ENCODE measurements at regions of chr1 and their contacts with region 1.

Region 1: GRCh38 chr1:35298464-35298863 is 30.0 kb downstream of the ZMYM4 start:
- DNase-seq: peak in 3 of 5 donors; percentile 23 to 31 (median 24)
- ATAC-seq: peak; percentile 62 to 84 (median 78)
- H3K4me3 ChIP-seq: no peak overlapping the region
- H3K27ac ChIP-seq: no peak overlapping the region
- H3K4me1 ChIP-seq: peaks cover 0 to 28% (median 17%) of the 10 kb centered on the region in 12 donors
- H3K27me3 ChIP-seq: no peaks in the 10 kb centered on the region
- CTCF ChIP-seq: peak in 11 of 12 donors; percentile 20 to 60 (median 45)
- POLR2A ChIP-seq: no peak

Region 2: GRCh38 chr1:35030756-35031446 is 267.6 kb before region 1 on chr1:
- intact Hi-C with region 1: loop called in 1 of 10 experiments (anchors 10 kb)
- DNase-seq: peak in 2 of 5 donors; percentile 11 to 27
- ATAC-seq: peak in 3 of 4 donors; percentile 33 to 44 (median 43)
- H3K4me3 ChIP-seq: peak overlapping the region; percentile 60 to 95 (median 73)
- H3K27ac ChIP-seq: peak overlapping the region; percentile 81 to 96 (median 93)
- H3K4me1 ChIP-seq: peaks cover 0 to 28% (median 15%) of the 10 kb centered on the region in 12 donors
- H3K27me3 ChIP-seq: no peaks in the 10 kb centered on the region
- CTCF ChIP-seq: no peak
- POLR2A ChIP-seq: no peak

Region 3: DNA sequence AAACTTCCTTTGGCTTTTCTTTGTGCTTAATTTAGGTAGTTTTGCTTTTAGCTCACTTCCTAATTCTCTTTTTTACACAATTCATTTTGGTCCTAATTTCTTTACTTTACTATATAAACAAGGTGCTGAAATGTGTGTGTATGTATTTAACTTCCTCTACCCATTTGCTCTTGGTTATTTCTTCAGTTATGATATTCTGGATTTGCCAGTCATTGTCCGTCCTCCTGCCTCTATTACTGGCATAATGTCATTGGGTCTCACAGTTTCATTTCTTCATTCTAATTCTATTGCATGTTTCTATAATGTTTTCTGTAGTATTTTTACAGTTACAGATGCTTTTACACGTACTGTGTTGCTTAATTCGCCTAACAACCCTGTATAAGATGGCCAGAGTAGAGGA is 66.3 kb after region 1 on chr1:
- intact Hi-C with region 1: no loop called
- DNase-seq: no peak
- ATAC-seq: no peak
- H3K4me3 ChIP-seq: no peak overlapping the region
- H3K27ac ChIP-seq: peak overlapping the region in 1 of 12 donors; percentile 23
- H3K4me1 ChIP-seq: peaks cover 0 to 19% (median 3%) of the 10 kb centered on the region in 12 donors
- H3K27me3 ChIP-seq: no peaks in the 10 kb centered on the region
- CTCF ChIP-seq: no peak
- POLR2A ChIP-seq: no peak

Region 4: GRCh38 chr1:35769759-35770446 is 471.4 kb after region 1 on chr1 and contains the start of gene CLSPN:
- intact Hi-C with region 1: no loop called
- DNase-seq: peak; percentile 95 to 96 (median 96)
- ATAC-seq: peak; percentile 99 to 100 (median 99)
- H3K4me3 ChIP-seq: peak within 1 kb of the TSS; percentile 59 to 97 (median 86)
- H3K27ac ChIP-seq: peak within 1 kb of the TSS in 11 of 12 donors; percentile 39 to 91 (median 77)
- H3K4me1 ChIP-seq: peaks cover 0 to 18% (median 4%) of the 10 kb centered on the region in 12 donors
- H3K27me3 ChIP-seq: no peaks in the 10 kb centered on the region
- CTCF ChIP-seq: no peak
- POLR2A ChIP-seq: peak in 1 of 2 donors; percentile 31
- total RNA-seq, gene CLSPN: 0.22 to 6.3 (median 0.35) TPM

Measured in heart left ventricle (tissue), 16 donors.